ENCODE measurements at regions of chr1 and their contacts with region 1.

Region 1: GRCh38 chr1:89261926-89262515 is 10.6 kb downstream of the GBP5 start:
- DNase-seq: no peak
- H3K4me3 ChIP-seq: peak overlapping the region; percentile 36 to 46 (median 42)
- H3K27ac ChIP-seq: peak overlapping the region; percentile 61 to 80 (median 72)
- H3K4me1 ChIP-seq: peaks cover 36 to 43% (median 42%) of the 10 kb centered on the region in 4 donors
- H3K27me3 ChIP-seq: no peaks in the 10 kb centered on the region
- CTCF ChIP-seq: no peak
- EP300 ChIP-seq: no peak
- POLR2A ChIP-seq: no peak

Region 2: GRCh38 chr1:89129911-89130310 is 132.1 kb before region 1 on chr1:
- intact Hi-C with region 1: loop called (anchors 10 kb)
- DNase-seq: no peak
- H3K4me3 ChIP-seq: peak overlapping the region in 2 of 4 donors; percentile 41 to 44
- H3K27ac ChIP-seq: peak overlapping the region; percentile 82 to 90 (median 86)
- H3K4me1 ChIP-seq: peaks cover 10 to 43% (median 37%) of the 10 kb centered on the region in 4 donors
- H3K27me3 ChIP-seq: no peaks in the 10 kb centered on the region
- CTCF ChIP-seq: no peak
- EP300 ChIP-seq: no peak
- POLR2A ChIP-seq: no peak

Region 3: DNA sequence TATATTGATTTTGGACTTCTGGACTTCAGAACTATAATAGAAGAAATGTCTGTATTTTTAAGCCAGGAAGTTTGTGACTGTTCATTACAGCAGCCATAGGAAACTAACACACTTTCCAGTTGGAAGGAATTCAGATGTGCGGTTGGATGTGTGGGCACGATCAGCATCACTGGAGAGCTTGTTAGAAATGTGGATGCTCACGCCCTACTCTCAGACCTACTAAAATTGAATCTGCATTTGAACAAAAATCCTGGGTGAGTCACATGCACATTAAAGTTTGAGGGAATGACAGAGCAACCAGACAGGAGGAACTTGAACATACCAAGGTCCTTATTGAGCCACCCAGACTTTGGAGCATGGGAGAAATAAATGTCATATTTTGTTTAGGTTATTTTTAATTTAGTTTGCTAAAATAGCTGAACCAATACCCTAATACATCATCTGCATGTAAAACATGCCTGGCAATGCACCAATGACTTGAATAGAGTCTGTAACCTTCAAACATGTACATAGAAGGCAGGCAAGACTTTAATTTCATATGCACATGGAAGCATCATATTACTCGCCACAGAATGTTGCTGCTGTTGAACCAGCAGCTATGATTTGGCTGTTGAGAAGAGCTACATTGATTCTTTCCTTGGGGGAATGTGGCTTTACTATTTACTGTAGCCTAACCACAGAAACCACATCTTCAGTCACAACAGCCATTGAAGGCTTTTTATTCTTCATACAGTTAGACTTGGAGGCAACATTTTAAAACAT is 1108.8 kb after region 1 on chr1:
- intact Hi-C with region 1: no loop called
- DNase-seq: no peak
- H3K4me3 ChIP-seq: no peak overlapping the region
- H3K27ac ChIP-seq: no peak overlapping the region
- H3K4me1 ChIP-seq: no peaks in the 10 kb centered on the region
- H3K27me3 ChIP-seq: no peaks in the 10 kb centered on the region
- CTCF ChIP-seq: no peak
- EP300 ChIP-seq: no peak
- POLR2A ChIP-seq: no peak